Right ventricle myocardium superior (tissue), 1 donor: ENCODE measurements at regions of chr5 and their contacts with region 1.

Region 1: DNA sequence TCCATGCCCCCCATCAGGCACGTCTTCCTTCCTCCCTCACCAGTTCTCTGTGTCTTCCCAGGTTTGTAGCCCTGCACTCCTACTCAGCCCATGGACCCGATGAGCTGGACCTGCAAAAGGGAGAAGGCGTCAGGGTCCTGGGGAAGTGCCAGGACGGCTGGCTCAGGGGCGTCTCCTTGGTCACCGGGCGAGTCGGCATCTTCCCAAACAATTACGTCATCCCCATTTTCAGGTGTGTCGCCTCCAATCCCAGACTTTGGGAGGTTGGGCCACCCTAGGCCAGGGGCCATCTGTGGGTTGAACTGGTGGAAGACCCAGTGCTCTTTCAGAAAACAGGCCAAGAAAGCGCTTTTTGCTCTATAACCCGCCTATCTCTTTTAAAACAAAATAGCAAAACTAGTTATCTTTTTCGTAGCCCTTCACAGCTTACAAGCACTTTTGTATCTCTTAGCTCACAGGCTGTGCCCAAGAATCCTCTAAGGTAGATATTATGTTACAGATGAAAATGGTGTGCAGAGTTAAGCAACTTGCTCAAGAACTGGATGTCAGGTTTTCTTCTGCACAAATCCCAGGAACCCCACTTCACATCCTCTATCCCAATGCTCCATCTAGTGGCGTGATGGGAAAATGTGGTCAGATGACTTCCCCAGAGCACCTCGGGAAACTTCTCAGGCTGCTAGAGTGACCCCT is 56.2 kb downstream of the PLAC8L1 start:
- DNase-seq: no peak
- ATAC-seq: peak; percentile 79

Region 2: GRCh38 chr5:145834917-145835847 is 214.0 kb before region 1 on chr5 and contains the start of gene PRELID2:
- intact Hi-C with region 1: loop called (anchors 10 kb)
- DNase-seq: peak; percentile 95
- ATAC-seq: peak; percentile 93
- total RNA-seq, gene PRELID2: 41.2 TPM